Activated CD4-positive, alpha-beta memory T cell treated with anti-CD3 and anti-CD28 coated beads for 36 hours (primary cell): ENCODE measurements at regions of chr5 and their contacts with region 1.

Region 1: GRCh38 chr5:107263387-107264018 is 407.2 kb downstream of the EFNA5 start:
- DNase-seq: no peak
- H3K4me3 Mint-ChIP-seq: no peak overlapping the region
- H3K27ac Mint-ChIP-seq: no peak overlapping the region
- H3K4me1 Mint-ChIP-seq: peaks cover 4% of the 10 kb centered on the region
- H3K27me3 Mint-ChIP-seq: no peaks in the 10 kb centered on the region

Region 2: GRCh38 chr5:107289030-107289714 is 25.7 kb after region 1 on chr5:
- CTCF ChIA-PET with region 1: no interaction called
- POLR2A ChIA-PET with region 1: interaction called, 4 read pairs
- intact Hi-C with region 1: loop called (anchors 1 kb)
- DNase-seq: no peak
- H3K4me3 Mint-ChIP-seq: no peak overlapping the region
- H3K27ac Mint-ChIP-seq: no peak overlapping the region
- H3K4me1 Mint-ChIP-seq: peaks cover 11% of the 10 kb centered on the region
- H3K27me3 Mint-ChIP-seq: peaks cover 10% of the 10 kb centered on the region

Region 3: DNA sequence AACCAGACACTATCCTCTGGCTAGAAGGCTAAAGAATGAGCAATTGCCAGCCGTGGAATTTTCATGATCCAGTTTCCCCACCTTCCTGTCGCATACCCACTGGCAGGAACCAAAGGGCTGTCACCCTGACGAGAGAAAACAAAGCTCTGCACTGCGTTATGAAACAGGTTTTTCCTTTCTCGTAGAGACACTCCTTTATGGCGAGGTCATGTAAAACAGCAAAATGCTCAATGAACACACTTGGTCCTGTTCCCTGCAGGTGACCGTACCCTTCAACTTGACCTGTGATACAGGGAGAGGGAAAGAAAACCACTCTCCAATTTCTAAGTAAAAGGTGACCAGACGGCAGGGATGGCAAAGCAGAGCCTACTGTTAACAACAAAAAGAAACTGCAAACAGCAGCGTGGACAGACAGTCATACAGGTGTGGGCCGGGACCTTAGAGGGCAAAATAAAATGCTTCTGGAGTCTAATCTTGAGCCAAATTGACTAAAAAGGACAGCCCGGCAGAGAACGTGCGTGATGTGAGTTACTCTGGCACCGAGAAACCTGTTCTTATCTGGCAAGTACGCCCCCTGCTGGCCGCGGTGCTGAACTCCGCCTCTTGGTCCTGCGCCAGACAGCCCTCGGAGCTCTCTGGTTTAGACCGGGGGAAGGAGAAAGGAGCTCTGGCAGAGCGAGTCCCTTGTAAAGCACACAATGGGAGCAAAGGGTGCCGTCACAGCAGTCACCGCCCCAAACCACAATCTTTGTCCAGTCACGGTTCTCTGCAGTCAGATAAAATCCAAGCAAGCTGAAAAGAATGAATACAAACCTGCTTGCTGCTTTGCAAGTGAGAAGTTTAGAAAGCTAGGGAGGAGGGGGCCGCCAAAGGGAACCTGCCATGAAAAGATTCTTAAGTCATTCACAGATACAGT is 308.4 kb after region 1 on chr5:
- CTCF ChIA-PET with region 1: interaction called, 4 read pairs
- POLR2A ChIA-PET with region 1: no interaction called
- intact Hi-C with region 1: loop called (anchors 1 kb)
- DNase-seq: peak; percentile 91
- H3K4me3 Mint-ChIP-seq: peak overlapping the region; percentile 71
- H3K27ac Mint-ChIP-seq: no peak overlapping the region
- H3K4me1 Mint-ChIP-seq: peaks cover 16% of the 10 kb centered on the region
- H3K27me3 Mint-ChIP-seq: peaks cover 17% of the 10 kb centered on the region

Region 4: GRCh38 chr5:107673368-107674136 is 410.0 kb after region 1 on chr5:
- CTCF ChIA-PET with region 1: no interaction called
- POLR2A ChIA-PET with region 1: no interaction called
- intact Hi-C with region 1: loop called (anchors 10 kb)
- DNase-seq: peak; percentile 86
- H3K4me3 Mint-ChIP-seq: peak overlapping the region; percentile 59
- H3K27ac Mint-ChIP-seq: no peak overlapping the region
- H3K4me1 Mint-ChIP-seq: peaks cover 29% of the 10 kb centered on the region
- H3K27me3 Mint-ChIP-seq: peaks cover 52% of the 10 kb centered on the region